ENCODE measurements at regions of chr19 and their contacts with region 1.

Region 1: DNA sequence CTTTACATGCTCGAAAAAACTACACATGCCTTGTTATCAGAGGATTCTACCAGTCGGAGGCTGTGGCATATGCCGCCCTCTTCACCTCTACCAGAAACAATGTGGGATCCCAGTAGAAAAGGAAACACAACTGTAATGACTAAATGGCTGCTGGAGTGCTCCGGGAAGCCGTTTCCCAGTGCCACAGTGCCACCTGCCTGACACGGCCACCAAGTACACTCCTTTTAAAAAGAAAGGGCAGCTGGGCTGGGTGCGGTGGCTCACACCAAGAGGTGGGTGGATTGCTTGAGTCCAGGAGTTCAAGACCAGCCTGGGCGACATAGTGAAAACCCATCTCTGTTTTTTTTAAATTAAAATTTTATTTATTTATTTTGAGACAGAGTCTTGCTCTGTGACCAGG is 67.3 kb downstream of the TRPM4 start:
- DNase-seq: peak; percentile 80
- H3K4me3 ChIP-seq: no peak overlapping the region
- H3K27ac ChIP-seq: no peak overlapping the region
- H3K4me1 ChIP-seq: no peaks in the 10 kb centered on the region
- H3K27me3 ChIP-seq: no peaks in the 10 kb centered on the region
- CTCF ChIP-seq: peak; percentile 51 to 66
- POLR2A ChIP-seq: no peak

Region 2: DNA sequence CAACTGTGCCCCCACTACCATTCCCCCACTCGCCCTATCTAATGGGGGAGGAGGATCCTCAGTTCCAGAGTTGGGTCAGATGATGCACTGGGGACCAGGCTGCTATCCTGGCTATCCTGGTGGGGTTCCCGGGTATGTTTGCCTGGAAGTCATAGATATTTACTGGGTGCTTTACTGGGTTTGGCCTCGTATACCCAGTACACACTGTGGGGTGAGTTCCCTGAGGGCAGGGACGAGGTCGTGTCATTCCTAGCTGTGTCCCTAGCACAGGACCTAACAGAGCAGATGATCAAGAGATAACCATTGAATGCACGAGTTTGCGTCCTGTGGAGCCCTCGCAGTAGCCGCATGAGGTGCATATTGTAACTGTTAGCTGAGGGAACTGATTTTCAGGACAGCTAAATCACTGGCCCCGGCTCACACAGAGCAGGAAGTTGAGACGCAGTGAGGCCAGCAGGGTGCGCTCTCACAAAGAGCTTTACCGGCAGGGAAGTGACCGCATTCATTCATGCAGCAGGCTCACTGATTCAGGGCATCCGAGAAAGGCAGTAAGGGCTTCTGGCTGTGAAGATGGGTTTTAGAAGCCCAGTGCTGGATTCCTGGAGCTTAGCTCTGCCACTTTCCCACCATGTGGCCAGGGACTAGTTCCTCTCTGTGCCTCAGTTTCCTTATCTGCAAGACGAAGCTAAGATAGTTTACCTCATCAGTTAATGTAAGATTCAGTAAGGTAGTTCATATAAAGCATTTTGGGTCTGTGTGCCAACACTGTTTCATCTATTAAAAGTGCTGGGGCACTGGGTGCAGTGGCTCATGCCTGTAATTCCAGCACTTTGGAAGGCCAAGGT is 225.2 kb before region 1 on chr19:
- CTCF ChIA-PET with region 1: interaction called, 26 read pairs
- POLR2A ChIA-PET with region 1: no interaction called
- dilution Hi-C with region 1: no loop called
- intact Hi-C with region 1: no loop called
- DNase-seq: peak; percentile 64
- H3K4me3 ChIP-seq: no peak overlapping the region
- H3K27ac ChIP-seq: no peak overlapping the region
- H3K4me1 ChIP-seq: peaks cover under 1% of the 10 kb centered on the region
- H3K27me3 ChIP-seq: no peaks in the 10 kb centered on the region
- CTCF ChIP-seq: peak; percentile 75 to 85
- POLR2A ChIP-seq: no peak

Region 3: GRCh38 chr19:49106648-49107135 is 118.2 kb before region 1 on chr19:
- CTCF ChIA-PET with region 1: interaction called, 15 read pairs
- POLR2A ChIA-PET with region 1: no interaction called
- dilution Hi-C with region 1: no loop called
- intact Hi-C with region 1: no loop called
- DNase-seq: peak; percentile 45
- H3K4me3 ChIP-seq: no peak overlapping the region
- H3K27ac ChIP-seq: no peak overlapping the region
- H3K4me1 ChIP-seq: no peaks in the 10 kb centered on the region
- H3K27me3 ChIP-seq: no peaks in the 10 kb centered on the region
- CTCF ChIP-seq: peak; percentile 82 to 84
- POLR2A ChIP-seq: no peak

Region 4: DNA sequence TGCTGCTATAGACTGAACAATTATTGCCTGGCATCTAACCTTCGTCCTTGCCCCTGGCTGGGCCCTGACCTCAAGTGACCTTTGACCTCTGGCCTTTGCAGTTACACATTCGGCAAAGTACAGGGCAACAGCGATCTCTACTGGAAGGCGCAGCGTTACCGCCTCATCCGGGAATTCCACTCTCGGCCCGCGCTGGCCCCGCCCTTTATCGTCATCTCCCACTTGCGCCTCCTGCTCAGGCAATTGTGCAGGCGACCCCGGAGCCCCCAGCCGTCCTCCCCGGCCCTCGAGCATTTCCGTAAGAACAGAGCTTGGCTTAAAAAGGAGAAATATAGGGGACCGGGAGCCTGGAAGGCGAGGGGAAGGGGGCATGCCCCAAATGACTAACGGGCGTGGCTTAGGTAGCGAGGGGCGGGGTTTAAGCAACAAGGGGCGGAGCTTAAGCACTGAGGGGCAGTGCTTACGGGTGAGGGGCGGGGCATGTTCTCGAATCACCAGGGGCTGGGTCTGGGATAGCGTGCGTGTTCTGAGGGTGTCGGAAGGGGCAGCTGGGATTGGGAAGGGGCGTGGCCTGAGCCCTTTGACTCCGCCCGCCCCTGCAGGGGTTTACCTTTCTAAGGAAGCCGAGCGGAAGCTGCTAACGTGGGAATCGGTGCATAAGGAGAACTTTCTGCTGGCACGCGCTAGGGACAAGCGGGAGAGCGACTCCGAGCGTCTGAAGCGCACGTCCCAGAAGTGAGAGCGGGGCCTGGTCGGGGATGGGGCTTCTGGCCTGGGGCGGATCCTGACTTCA is 14.6 kb before region 1 on chr19:
- CTCF ChIA-PET with region 1: interaction called, 10 read pairs
- POLR2A ChIA-PET with region 1: no interaction called
- dilution Hi-C with region 1: no loop called
- intact Hi-C with region 1: no loop called
- DNase-seq: peak; percentile 9
- H3K4me3 ChIP-seq: no peak overlapping the region
- H3K27ac ChIP-seq: no peak overlapping the region
- H3K4me1 ChIP-seq: no peaks in the 10 kb centered on the region
- H3K27me3 ChIP-seq: no peaks in the 10 kb centered on the region
- CTCF ChIP-seq: no peak
- POLR2A ChIP-seq: no peak

Region 5: GRCh38 chr19:49301165-49301865 is 76.5 kb after region 1 on chr19:
- CTCF ChIA-PET with region 1: interaction called, 5 read pairs
- POLR2A ChIA-PET with region 1: no interaction called
- dilution Hi-C with region 1: no loop called
- intact Hi-C with region 1: loop called (anchors 1 kb)
- DNase-seq: peak; percentile 64
- H3K4me3 ChIP-seq: no peak overlapping the region
- H3K27ac ChIP-seq: no peak overlapping the region
- H3K4me1 ChIP-seq: no peaks in the 10 kb centered on the region
- H3K27me3 ChIP-seq: peaks cover 0 to 5% of the 10 kb centered on the region in 2 experiments
- CTCF ChIP-seq: peak; percentile 93 to 94
- POLR2A ChIP-seq: no peak

Region 6: DNA sequence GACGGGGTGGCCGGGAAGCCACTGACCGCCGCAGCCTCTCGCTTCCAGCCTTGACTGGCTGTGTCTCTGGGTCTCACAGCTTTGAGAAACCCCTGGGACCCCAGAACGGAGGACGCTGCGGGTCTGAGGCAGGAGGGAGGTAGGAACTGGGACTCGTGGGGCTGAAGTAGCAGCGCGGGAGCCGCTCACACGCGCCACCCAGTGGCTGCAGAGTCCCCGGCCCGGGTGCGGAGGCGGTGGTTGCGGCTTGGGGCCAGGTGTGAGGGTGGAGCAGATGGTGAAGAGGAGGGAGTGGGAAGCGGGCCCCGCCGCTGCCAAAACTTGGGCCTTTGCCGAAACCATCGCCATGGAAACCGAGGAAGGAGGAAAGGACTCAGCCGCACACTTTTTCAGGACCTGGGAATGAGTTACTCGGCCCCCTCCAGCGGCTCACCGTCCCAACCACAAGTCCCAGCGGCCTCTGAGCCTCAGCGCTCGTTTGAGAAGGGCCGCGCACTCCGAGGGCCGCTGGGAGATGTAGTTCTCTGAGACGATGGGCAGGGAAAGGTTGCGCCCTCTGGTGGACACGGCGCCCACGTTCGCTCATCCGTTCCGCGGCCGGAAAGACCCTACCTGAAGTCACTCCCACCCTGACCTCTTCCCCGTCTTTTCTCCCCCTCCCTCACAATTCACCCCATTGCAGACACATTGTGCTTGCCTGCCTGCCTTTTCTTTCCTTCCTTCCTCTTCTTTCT is 218.7 kb after region 1 on chr19:
- CTCF ChIA-PET with region 1: interaction called, 3 read pairs
- POLR2A ChIA-PET with region 1: no interaction called
- dilution Hi-C with region 1: no loop called
- intact Hi-C with region 1: loop called (anchors 1 kb)
- DNase-seq: peak; percentile 92
- H3K4me3 ChIP-seq: peak overlapping the region; percentile 58 to 78 (median 65)
- H3K27ac ChIP-seq: no peak overlapping the region
- H3K4me1 ChIP-seq: no peaks in the 10 kb centered on the region
- H3K27me3 ChIP-seq: peaks cover 30 to 37% of the 10 kb centered on the region in 2 experiments
- CTCF ChIP-seq: peak; percentile 73 to 93
- POLR2A ChIP-seq: no peak

Region 7: GRCh38 chr19:49453757-49454240 is 228.9 kb after region 1 on chr19:
- CTCF ChIA-PET with region 1: no interaction called
- POLR2A ChIA-PET with region 1: no interaction called
- dilution Hi-C with region 1: no loop called
- intact Hi-C with region 1: no loop called
- DNase-seq: no peak
- H3K4me3 ChIP-seq: peak overlapping the region; percentile 31 to 74 (median 52)
- H3K27ac ChIP-seq: peak overlapping the region; percentile 83
- H3K4me1 ChIP-seq: peaks cover 11% of the 10 kb centered on the region
- H3K27me3 ChIP-seq: no peaks in the 10 kb centered on the region
- CTCF ChIP-seq: no peak
- POLR2A ChIP-seq: no peak

Measured in endothelial cell of umbilical vein (primary cell).